ENCODE measurements at regions of chr2 and their contacts with region 1.

Region 1: GRCh38 chr2:105287692-105288091 is 41.8 kb downstream of the TGFBRAP1 start:
- DNase-seq: peak; percentile 61
- H3K4me3 ChIP-seq: no peak overlapping the region
- H3K27ac ChIP-seq: no peak overlapping the region
- H3K4me1 ChIP-seq: no peaks in the 10 kb centered on the region
- H3K27me3 ChIP-seq: no peaks in the 10 kb centered on the region
- CTCF ChIP-seq: peak; percentile 51 to 58
- POLR2A ChIP-seq: no peak

Region 2: DNA sequence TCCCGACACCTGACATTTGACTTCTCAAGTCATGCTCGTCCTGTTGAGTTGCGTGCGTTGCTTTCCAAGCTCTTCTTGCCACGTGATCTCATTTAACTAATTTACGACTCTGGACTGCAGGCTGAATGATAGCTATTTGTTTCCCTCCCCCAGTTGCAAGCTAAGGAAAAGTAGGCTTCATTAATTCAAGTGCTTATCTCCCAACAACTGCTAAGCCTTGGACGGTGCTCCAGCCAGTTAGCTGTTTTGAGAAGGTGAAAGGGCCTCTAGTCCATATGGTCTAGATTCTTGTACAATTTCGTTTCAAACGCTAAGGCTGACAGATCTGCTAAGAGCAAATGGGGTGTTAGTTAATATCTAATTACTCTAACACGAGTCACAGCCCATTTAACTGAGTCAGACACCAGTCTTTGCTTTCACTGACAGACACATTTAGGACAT is 25.0 kb before region 1 on chr2:
- CTCF ChIA-PET with region 1: no interaction called
- POLR2A ChIA-PET with region 1: no interaction called
- dilution Hi-C with region 1: no loop called
- intact Hi-C with region 1: no loop called
- DNase-seq: no peak
- H3K4me3 ChIP-seq: no peak overlapping the region
- H3K27ac ChIP-seq: no peak overlapping the region
- H3K4me1 ChIP-seq: no peaks in the 10 kb centered on the region
- H3K27me3 ChIP-seq: no peaks in the 10 kb centered on the region
- CTCF ChIP-seq: no peak
- POLR2A ChIP-seq: no peak

Region 3: DNA sequence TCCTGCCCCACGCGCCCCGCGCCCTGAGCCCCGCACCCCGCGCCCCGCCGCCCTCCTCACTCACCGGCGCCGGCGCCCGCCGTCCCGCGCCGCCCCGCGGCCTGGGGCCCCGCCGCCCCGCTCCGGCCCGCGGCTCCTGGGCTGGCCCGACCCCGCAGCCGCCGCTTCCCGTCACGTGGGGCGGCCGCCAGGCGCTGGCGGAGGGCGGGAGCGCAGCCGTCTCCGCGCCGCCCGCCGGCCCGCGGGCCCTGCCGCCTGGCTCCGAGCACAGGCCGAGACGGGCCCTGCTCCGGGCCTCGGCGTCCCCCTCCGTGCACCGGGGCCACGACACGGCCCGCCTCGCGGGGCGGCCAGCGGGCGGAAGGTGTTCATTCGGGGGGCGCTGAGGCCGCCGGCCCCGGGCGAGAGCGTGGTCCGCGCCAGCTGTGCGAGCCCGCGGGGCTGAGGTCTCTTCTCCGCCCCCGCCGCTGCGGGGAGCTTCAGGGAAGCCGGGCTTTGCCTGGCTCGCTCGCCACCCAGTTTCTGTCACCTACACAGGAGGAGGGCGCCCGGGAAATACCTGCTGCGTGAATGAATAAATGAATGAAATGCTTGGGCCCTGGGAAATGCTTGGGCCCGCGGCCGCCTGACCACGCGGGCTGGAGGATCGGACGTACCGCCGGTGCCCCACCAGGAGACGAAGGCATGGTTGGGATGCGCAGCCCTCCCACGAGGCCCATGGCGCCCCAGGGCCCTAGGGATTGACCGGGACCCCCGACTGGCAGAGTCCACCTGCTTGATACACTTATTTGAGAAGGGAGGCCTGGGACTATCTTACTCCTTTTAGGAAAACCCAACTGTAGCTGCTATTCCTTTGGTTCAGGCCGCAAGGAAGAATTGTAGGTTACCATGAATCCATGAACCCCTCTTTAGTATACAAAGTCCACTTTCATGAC is 42.1 kb after region 1 on chr2 and contains the start of gene TGFBRAP1:
- CTCF ChIA-PET with region 1: interaction called, 13 read pairs
- POLR2A ChIA-PET with region 1: interaction called, 5 read pairs
- dilution Hi-C with region 1: no loop called
- intact Hi-C with region 1: no loop called
- DNase-seq: peak; percentile 35
- H3K4me3 ChIP-seq: peak within 1 kb of the TSS in 2 of 3 experiments; percentile 42 to 84
- H3K27ac ChIP-seq: peak within 1 kb of the TSS; percentile 82
- H3K4me1 ChIP-seq: peaks cover 40% of the 10 kb centered on the region
- H3K27me3 ChIP-seq: no peaks in the 10 kb centered on the region
- CTCF ChIP-seq: peak in 1 of 2 donors; percentile 4
- POLR2A ChIP-seq: peak; percentile 72
- total RNA-seq, gene TGFBRAP1: 34.9 and 37.6 TPM in 2 replicates

Region 4: GRCh38 chr2:105337124-105338019 is 49.7 kb after region 1 on chr2 and contains the start of gene C2orf49:
- CTCF ChIA-PET with region 1: interaction called, 8 read pairs
- POLR2A ChIA-PET with region 1: no interaction called
- dilution Hi-C with region 1: no loop called
- intact Hi-C with region 1: loop called (anchors 1 kb)
- DNase-seq: peak; percentile 88
- H3K4me3 ChIP-seq: peak within 1 kb of the TSS; percentile 82 to 98 (median 93)
- H3K27ac ChIP-seq: peak within 1 kb of the TSS; percentile 95
- H3K4me1 ChIP-seq: peaks cover 22% of the 10 kb centered on the region
- H3K27me3 ChIP-seq: no peaks in the 10 kb centered on the region
- CTCF ChIP-seq: no peak
- POLR2A ChIP-seq: peak; percentile 7
- total RNA-seq, gene C2orf49: 15.0 and 16.0 TPM in 2 replicates

Region 5: GRCh38 chr2:105592288-105592687 is 304.6 kb after region 1 on chr2:
- CTCF ChIA-PET with region 1: no interaction called
- POLR2A ChIA-PET with region 1: no interaction called
- dilution Hi-C with region 1: no loop called
- intact Hi-C with region 1: no loop called
- DNase-seq: no peak
- H3K4me3 ChIP-seq: no peak overlapping the region
- H3K27ac ChIP-seq: no peak overlapping the region
- H3K4me1 ChIP-seq: no peaks in the 10 kb centered on the region
- H3K27me3 ChIP-seq: no peaks in the 10 kb centered on the region
- CTCF ChIP-seq: no peak
- POLR2A ChIP-seq: no peak

Measured in endothelial cell of umbilical vein (primary cell).